Ascending aorta (tissue), 2 donors: ENCODE measurements at regions of chr15 and their contacts with region 1.

Region 1: DNA sequence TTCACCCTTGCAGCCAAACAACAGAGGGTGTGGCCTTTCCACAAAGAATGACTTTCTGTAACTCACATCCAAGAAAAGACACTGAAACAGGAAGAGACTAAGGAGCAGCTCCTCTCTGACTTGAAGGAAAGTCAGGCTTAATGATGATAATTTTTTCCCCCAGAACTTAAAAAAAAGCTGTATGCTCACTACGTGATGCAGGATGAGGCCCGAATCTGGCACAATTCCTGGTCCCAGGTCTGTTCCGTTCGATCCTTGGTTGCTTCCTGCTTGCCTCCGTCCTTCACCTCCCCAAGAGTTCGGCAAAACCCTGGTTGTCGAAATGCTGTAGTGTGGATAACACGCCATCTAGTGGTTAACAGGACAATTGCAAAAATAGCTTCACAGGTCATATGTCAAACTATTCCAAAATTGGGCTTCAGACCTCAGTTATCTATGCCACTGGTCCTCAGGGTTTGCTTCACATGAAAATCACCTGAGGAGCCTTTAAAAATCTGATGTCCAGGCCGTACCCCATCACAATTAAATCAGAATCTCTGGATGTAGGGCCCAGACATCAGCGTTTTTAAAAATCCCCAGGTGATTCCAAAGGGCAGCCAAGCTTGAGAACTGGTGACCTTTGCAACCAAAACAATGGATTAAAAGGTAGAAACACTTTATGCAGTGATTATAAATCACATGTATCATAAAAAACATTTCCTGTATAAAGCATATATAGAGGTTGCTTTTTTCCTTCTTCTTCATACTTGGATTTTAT is 28.1 kb upstream of the SYNM start:
- DNase-seq: peak in 1 of 2 donors; percentile 79
- H3K4me3 ChIP-seq: peak overlapping the region; percentile 20 to 56
- H3K27ac ChIP-seq: no peak overlapping the region
- H3K4me1 ChIP-seq: no peaks in the 10 kb centered on the region
- H3K27me3 ChIP-seq: no peaks in the 10 kb centered on the region
- CTCF ChIP-seq: peak; percentile 73 to 92 (median 79)

Region 2: DNA sequence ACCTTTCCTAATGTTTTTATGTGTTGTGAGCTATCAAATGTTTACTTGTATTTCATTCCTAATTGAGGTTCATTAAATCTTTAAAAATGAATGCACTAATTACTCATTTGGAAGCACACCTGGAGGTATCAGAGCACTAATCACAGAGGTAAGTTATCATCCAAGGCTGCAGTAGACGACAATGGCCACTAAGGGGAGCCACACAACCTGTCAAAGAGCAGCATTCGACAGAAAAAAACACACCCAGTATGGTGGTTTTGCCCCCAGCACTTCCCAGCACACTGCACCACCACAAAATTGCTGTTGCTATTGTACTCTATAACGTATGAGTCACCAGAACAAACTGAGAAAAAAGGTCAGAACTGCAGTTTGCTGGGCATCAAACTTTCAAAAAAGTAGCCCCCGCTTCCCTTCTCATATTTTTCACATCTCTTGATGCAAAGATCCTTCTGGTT is 634.3 kb before region 1 on chr15:
- intact Hi-C with region 1: loop called (anchors 2 kb)
- DNase-seq: peak in 1 of 2 donors; percentile 79
- H3K4me3 ChIP-seq: no peak overlapping the region
- H3K27ac ChIP-seq: no peak overlapping the region
- H3K4me1 ChIP-seq: no peaks in the 10 kb centered on the region
- H3K27me3 ChIP-seq: no peaks in the 10 kb centered on the region
- CTCF ChIP-seq: peak; percentile 68 to 90 (median 79)

Region 3: DNA sequence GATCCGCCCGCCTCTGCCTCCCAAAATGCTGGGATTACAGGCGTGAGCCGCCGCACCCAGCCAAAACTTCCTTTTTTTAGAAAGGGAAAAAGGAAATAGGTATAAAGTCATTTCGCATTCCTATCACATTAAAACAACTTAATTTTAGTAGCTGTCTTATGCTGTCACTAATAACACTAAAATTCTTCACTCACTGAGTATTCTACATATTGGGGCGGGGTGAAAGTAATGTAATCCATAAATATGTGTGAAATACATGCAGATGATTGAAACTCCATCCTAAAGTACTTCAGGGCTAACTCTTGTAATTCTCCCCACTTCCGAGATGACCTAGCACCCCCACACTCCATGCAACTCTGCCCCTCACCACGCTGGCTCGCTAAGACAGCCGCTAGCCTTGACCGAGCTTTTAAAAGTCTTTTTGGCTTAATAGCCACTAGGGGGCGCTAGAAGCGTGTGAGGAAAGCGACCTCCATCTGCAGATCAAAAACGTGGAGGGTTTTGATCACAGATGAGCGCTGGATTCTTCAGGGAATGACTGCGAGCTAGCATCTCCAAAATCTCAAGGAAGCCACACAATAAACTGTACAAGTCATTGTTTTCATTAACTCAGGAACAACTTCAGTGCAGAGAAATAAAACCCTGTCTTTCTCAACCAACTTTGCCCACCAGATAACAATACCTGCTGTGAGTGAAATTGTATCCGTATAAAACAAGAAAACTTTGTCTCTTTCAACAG is 557.7 kb before region 1 on chr15:
- intact Hi-C with region 1: loop called (anchors 1 kb)
- DNase-seq: no peak
- H3K4me3 ChIP-seq: no peak overlapping the region
- H3K27ac ChIP-seq: no peak overlapping the region
- H3K4me1 ChIP-seq: peaks cover 0 to 2% of the 10 kb centered on the region in 2 donors
- H3K27me3 ChIP-seq: no peaks in the 10 kb centered on the region
- CTCF ChIP-seq: peak; percentile 71 to 92 (median 78)

Region 4: DNA sequence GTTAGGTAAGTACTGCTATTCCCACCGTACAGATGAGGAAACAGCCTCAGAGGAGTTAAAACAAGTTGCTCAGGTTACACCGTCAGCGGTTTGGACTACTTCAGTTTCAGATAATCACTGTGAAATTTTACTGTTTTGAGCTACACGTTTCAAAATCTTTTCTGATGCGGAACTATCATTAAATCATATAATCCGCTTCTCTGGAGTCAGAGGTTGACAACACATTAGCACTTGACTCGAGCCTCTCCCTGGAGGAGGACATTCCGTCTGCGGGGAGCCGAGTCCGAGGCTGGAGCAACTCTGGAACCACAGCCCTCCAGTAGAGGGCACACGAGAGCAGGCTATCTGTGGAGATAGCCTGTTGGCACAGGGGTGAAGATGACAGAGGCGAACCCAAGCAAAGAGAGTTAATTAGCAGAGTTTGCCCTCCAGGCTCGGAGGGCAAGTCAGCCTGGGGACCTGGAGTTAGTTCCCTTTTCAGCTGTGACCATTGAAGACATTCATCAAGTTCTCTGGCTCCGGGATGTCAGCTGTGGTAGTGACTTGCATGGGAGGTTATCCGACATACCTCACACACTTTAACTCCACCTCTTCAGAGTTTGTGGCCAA is 297.2 kb before region 1 on chr15:
- intact Hi-C with region 1: loop called (anchors 5 kb)
- DNase-seq: peak in 1 of 2 donors; percentile 81
- H3K4me3 ChIP-seq: no peak overlapping the region
- H3K27ac ChIP-seq: peak overlapping the region; percentile 9 to 42
- H3K4me1 ChIP-seq: peaks cover 6 to 36% of the 10 kb centered on the region in 2 donors
- H3K27me3 ChIP-seq: no peaks in the 10 kb centered on the region
- CTCF ChIP-seq: peak; percentile 77 to 89 (median 87)

Region 5: DNA sequence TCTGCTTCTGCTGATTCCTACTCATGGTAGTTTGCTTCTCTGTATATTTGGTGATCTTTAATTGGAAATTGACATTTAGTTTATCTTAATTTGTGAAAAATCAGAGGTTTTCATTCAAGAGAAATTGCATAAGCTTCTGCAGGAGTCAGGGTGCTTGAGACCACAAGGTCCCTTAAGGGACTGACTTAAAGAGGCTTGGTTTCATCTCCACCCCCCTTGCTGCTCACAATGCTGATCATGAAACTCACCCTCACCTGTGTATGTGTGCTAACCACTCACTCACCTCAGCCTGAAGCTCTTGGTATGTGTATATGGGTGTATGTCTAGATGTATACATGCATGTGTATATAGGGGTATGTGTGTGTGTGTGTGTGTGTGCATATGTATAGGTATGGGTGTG is 80.6 kb before region 1 on chr15:
- intact Hi-C with region 1: no loop called
- DNase-seq: no peak
- H3K4me3 ChIP-seq: no peak overlapping the region
- H3K27ac ChIP-seq: no peak overlapping the region
- H3K4me1 ChIP-seq: no peaks in the 10 kb centered on the region
- H3K27me3 ChIP-seq: no peaks in the 10 kb centered on the region
- CTCF ChIP-seq: no peak

Region 6: GRCh38 chr15:99052205-99052604 is 24.5 kb before region 1 on chr15:
- intact Hi-C with region 1: no loop called
- DNase-seq: peak in 1 of 2 donors; percentile 5
- H3K4me3 ChIP-seq: no peak overlapping the region
- H3K27ac ChIP-seq: no peak overlapping the region
- H3K4me1 ChIP-seq: no peaks in the 10 kb centered on the region
- H3K27me3 ChIP-seq: no peaks in the 10 kb centered on the region
- CTCF ChIP-seq: no peak